HCT116 (cell line): ENCODE measurements at regions of chr11 and their contacts with region 1.

Region 1: GRCh38 chr11:31477528-31478222 is 31.7 kb downstream of the IMMP1L start:
- DNase-seq: no peak
- ATAC-seq: no peak
- H3K4me3 ChIP-seq: no peak overlapping the region
- H3K27ac ChIP-seq: no peak overlapping the region
- H3K4me1 ChIP-seq: no peaks in the 10 kb centered on the region
- H3K27me3 ChIP-seq: no peaks in the 10 kb centered on the region
- CTCF ChIP-seq: no peak
- POLR2A ChIP-seq: no peak
- RAD21 ChIP-seq: no peak

Region 2: GRCh38 chr11:31233424-31233823 is 244.3 kb before region 1 on chr11:
- CTCF ChIA-PET with region 1: no interaction called
- POLR2A ChIA-PET with region 1: no interaction called
- RAD21 ChIA-PET with region 1: no interaction called
- intact Hi-C with region 1: no loop called
- DNase-seq: peak; percentile 29
- ATAC-seq: peak; percentile 87
- H3K4me3 ChIP-seq: no peak overlapping the region
- H3K27ac ChIP-seq: no peak overlapping the region
- H3K4me1 ChIP-seq: no peaks in the 10 kb centered on the region
- H3K27me3 ChIP-seq: no peaks in the 10 kb centered on the region
- CTCF ChIP-seq: peak; percentile 40 to 60 (median 53); a peak in 5 of 6 replicates
- POLR2A ChIP-seq: no peak
- RAD21 ChIP-seq: peak; percentile 40

Region 3: DNA sequence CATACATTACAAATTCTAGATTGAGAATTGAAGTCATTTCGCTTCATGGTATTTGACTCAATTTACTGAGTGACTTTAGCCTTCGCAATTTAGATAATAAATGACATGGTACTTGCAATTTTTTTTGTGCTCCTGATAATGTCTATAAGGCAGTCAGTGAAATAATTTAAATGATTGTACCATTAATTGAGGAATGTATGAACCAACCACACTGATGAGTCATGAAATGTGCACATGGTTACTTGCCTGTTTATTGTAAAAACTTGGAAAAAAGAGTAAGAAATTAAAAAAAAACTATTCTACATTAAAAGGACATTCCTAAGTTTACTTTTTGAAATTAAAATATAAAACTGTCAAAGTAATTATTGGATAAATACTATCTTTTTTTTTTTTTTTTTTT is 64.7 kb before region 1 on chr11:
- CTCF ChIA-PET with region 1: no interaction called
- POLR2A ChIA-PET with region 1: no interaction called
- RAD21 ChIA-PET with region 1: no interaction called
- intact Hi-C with region 1: loop called (anchors 10 kb)
- DNase-seq: no peak
- ATAC-seq: no peak
- H3K4me3 ChIP-seq: no peak overlapping the region
- H3K27ac ChIP-seq: no peak overlapping the region
- H3K4me1 ChIP-seq: no peaks in the 10 kb centered on the region
- H3K27me3 ChIP-seq: no peaks in the 10 kb centered on the region
- CTCF ChIP-seq: no peak
- POLR2A ChIP-seq: no peak
- RAD21 ChIP-seq: no peak

Region 4: DNA sequence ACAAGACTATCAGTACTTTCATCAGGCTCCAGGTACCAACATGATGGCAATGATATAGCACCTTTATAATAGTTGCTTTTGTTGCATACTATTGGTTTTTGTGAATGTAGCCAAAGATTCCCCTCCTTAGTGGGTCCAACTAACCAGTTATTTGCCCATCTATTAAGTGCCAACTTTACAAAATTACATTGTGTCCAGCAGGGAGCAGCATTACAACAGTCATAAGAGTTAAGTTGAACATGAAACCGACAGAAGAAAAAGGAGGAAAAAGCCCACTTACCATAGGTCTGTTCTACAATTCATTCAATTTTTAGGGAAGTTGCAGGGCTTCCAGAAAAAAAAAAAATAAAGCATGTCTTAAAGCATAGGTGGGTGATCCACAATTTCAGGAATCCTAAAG is 10.2 kb after region 1 on chr11:
- CTCF ChIA-PET with region 1: no interaction called
- POLR2A ChIA-PET with region 1: no interaction called
- RAD21 ChIA-PET with region 1: no interaction called
- intact Hi-C with region 1: no loop called
- DNase-seq: peak; percentile 44
- ATAC-seq: peak; percentile 55
- H3K4me3 ChIP-seq: no peak overlapping the region
- H3K27ac ChIP-seq: no peak overlapping the region
- H3K4me1 ChIP-seq: no peaks in the 10 kb centered on the region
- H3K27me3 ChIP-seq: no peaks in the 10 kb centered on the region
- CTCF ChIP-seq: peak; percentile 39 to 63 (median 40); a peak in 5 of 6 replicates
- POLR2A ChIP-seq: no peak
- RAD21 ChIP-seq: peak; percentile 58